Dorsolateral prefrontal cortex (tissue), 120 donors: ENCODE measurements at regions of chr9 and their contacts with region 1.

Region 1: DNA sequence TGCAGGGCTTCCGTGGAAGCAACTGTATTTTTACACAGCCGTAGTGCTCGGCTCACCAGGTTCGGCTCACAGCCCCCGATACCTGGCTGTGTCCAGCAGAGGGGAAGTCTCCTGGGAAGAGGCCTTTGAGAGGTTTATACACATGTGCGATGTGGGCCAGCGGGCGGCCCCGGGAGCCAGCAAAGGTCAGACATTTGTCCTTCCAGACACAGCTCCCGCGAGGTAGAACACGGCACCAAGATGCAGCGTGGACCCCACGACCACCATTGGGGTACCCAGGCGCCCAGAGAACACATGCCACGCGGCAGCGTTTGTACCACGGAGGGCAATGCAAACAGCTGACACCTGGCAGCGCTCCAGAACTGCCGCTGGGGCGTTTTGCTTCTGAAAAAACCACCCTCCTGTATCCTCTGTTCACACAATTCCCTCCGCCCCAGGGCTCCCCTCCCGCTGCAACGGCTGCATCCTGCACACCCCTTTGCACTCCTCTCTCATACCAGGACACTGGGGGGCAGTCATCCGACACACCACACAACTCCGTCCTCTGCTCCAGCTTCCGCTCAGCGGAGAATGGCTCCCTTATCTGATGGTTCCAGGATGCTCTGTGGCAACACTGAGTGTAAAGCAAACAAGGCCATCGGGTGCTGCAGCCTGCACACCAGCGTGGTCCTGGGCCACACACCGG is 235.3 kb downstream of the SYK start:
- DNase-seq: peak; percentile 55 to 87 (median 81)
- H3K4me3 ChIP-seq: peak overlapping the region in 53 of 59 donors; percentile 6 to 59 (median 36)
- H3K27ac ChIP-seq: peak overlapping the region in 16 of 59 donors; percentile 0 to 65 (median 24)
- H3K27me3 ChIP-seq: no peaks in the 10 kb centered on the region
- CTCF ChIP-seq: peak; percentile 42 to 85 (median 74)

Region 2: GRCh38 chr9:90349907-90350306 is 687.1 kb before region 1 on chr9:
- intact Hi-C with region 1: no loop called
- DNase-seq: no peak
- H3K4me3 ChIP-seq: no peak overlapping the region
- H3K27ac ChIP-seq: no peak overlapping the region
- H3K27me3 ChIP-seq: peaks cover 0 to 4% (median 0%) of the 10 kb centered on the region in 45 donors
- CTCF ChIP-seq: no peak

Region 3: DNA sequence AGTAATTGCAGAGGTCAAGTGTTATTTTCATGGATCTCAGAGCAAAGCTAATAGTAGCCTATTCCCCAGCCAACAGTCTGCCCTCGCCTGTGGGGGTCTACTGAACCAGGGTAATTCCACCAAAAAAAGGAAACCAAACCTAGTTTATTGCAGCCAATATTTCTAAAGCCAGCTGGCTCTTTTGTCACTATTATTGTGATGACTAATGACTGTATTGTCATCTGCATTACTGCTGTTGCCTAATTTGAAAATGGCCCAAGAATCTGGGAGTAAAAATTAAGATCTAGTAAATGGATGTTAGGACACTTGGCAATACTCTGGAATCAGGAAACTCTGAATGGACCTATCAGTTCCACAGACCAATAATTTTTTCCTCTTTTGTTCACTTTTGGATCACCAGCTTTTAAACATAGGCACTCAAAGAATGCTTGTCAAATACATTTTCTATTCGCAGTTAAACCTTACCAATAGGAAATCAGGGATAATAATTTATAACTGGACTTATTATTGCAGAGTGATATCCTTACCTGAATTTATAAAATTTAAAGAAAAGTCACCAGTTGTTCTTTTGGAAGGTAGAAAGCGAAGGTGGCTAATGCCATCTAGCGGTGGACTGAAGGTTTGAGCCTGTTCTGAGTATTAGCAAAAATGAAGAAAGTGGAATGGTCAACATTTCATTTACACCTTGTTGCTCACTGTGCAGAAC is 166.2 kb before region 1 on chr9:
- intact Hi-C with region 1: no loop called
- DNase-seq: peak in 2 of 10 donors; percentile 32 to 50
- H3K4me3 ChIP-seq: no peak overlapping the region
- H3K27ac ChIP-seq: no peak overlapping the region
- H3K27me3 ChIP-seq: peaks cover 0 to 9% (median 0%) of the 10 kb centered on the region in 45 donors
- CTCF ChIP-seq: peak; percentile 68 to 96 (median 86)

Region 4: DNA sequence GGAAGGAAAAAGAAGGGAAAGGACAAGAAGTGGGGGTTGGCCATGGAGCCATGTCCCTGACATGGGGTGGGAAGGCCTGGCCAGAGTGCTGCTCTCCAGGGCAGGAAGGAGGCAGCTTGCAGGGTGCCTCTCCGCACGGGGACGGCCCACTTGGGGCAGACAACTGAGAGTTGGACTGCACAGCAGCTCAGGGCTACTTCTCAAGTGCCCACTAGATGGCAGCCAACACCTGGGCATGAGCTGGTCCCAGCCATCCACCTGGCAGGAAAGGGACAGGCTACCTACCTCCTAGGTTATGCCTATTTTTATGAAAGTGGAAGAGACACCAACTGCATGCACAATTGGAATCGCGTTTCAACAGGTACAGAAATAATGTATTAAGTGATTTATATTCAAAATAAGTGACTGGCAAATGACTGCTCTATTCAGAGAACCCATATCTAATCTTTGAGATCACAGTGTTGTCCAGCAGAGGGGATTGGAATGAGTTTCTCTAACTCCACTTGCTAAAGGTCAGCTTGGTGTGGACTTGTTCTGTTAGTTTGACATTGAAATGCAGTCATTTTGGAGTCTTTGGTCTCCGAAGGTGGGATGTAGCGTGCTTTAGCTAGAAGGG is 122.0 kb before region 1 on chr9:
- intact Hi-C with region 1: loop called in 1 of 2 experiments (anchors 5 kb)
- DNase-seq: peak; percentile 52 to 81 (median 71)
- H3K4me3 ChIP-seq: no peak overlapping the region
- H3K27ac ChIP-seq: no peak overlapping the region
- H3K27me3 ChIP-seq: peaks cover 0 to 12% (median 0%) of the 10 kb centered on the region in 45 donors
- CTCF ChIP-seq: peak; percentile 69 to 99 (median 93)

Region 5: GRCh38 chr9:91089405-91090129 is 52.6 kb after region 1 on chr9:
- intact Hi-C with region 1: loop called in 1 of 2 experiments (anchors 10 kb)
- DNase-seq: peak in 1 of 10 donors; percentile 37
- H3K4me3 ChIP-seq: no peak overlapping the region
- H3K27ac ChIP-seq: no peak overlapping the region
- H3K27me3 ChIP-seq: no peaks in the 10 kb centered on the region
- CTCF ChIP-seq: peak in 42 of 56 donors; percentile 5 to 59 (median 30)

Region 6: GRCh38 chr9:91193658-91194391 is 156.9 kb after region 1 on chr9:
- intact Hi-C with region 1: loop called in 1 of 2 experiments (anchors 5 kb)
- DNase-seq: peak; percentile 46 to 77 (median 67)
- H3K4me3 ChIP-seq: peak overlapping the region; percentile 35 to 80 (median 65)
- H3K27ac ChIP-seq: peak overlapping the region; percentile 42 to 98 (median 90)
- H3K27me3 ChIP-seq: no peaks in the 10 kb centered on the region
- CTCF ChIP-seq: peak in 11 of 56 donors; percentile 4 to 28 (median 13)

Region 7: DNA sequence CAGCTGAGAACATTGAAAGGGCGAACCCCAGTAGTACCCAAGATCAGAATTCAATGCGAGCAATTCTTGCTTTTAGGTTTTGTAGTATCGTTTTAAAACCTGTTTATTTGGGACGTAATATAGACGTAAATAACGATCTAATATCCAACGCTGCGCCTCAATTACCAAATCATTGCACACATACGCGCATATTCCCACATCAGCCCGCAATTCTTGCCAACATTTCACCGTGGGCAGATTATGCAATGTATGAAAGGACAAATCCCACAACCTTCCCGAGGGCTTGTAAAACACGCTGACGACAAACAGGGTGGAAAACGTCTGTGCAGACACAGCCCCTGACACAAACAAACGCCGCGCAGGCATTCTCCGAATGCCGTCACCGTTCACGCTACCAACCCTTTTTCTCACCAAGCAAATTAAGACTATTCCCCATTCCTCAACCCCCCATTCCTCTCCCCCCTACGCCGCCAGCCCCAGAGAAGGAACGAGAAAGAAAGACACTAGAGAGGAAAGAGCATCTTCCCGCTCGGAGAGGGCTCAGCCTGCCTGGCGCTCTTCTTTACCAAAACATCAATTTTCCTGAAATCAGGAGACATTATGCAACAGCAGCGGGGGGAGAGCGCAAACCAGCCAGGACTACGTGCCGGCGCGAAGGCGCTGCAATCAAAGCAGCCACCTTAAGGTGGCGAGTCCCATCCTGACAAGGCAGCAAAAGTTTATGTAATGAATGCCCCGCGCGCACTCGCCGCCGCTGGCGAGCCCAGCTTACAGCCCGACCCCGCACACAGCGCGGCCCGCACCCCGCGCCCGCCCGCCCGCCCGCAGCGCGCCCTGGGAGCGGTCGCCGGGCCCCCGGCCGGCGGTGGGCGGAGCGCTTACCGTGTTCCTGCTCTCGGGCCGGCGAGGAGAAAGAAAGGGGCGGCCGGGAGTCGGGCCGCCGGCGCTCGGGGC is 386.1 kb after region 1 on chr9:
- intact Hi-C with region 1: loop called (anchors 2 to 5 kb)
- DNase-seq: peak; percentile 37 to 74 (median 61)
- H3K4me3 ChIP-seq: peak overlapping the region; percentile 47 to 86 (median 73)
- H3K27ac ChIP-seq: peak overlapping the region in 58 of 59 donors; percentile 3 to 97 (median 88)
- H3K27me3 ChIP-seq: no peaks in the 10 kb centered on the region
- CTCF ChIP-seq: peak in 27 of 56 donors; percentile 2 to 45 (median 23)

Region 8: GRCh38 chr9:91681461-91682305 is 644.7 kb after region 1 on chr9:
- intact Hi-C with region 1: loop called (anchors 5 to 10 kb)
- DNase-seq: peak; percentile 63 to 88 (median 76)
- H3K4me3 ChIP-seq: peak overlapping the region in 58 of 59 donors; percentile 13 to 63 (median 44)
- H3K27ac ChIP-seq: no peak overlapping the region
- H3K27me3 ChIP-seq: peaks cover 0 to 4% (median 0%) of the 10 kb centered on the region in 45 donors
- CTCF ChIP-seq: peak; percentile 52 to 98 (median 86)